PC-9 (cell line): ENCODE measurements at regions of chr1 and their contacts with region 1.

Region 1: DNA sequence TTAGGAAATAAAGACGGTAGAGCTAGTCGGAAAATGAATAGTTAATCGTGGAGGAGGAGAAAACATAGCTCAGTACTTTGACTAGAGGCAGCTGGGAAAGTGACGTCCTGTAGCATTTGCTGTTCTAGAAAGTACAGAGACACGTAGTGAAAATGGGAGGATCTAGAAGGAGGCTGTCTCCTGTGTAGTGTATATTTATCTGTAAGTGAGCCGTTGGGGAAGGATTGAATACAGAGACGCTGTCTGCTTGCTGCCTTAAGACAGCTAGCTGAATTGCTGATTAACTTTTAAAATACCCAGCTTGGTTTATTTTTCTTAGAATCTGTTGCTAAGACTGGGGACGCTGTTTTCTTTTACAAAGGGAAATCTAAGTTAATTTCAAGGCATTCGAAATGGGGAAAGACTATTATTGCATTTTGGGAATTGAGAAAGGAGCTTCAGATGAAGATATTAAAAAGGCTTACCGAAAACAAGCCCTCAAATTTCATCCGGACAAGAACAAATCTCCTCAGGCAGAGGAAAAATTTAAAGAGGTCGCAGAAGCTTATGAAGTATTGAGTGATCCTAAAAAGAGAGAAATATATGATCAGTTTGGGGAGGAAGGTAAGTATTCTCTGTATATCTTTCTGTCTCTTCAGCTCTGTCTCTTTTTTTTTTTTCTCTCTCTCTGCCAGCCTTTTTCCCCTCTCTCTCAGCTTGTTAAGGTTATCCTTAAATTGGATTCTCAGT is at the start of gene DNAJB4:
- DNase-seq: peak; percentile 58 to 96
- H3K4me3 ChIP-seq: peak within 1 kb of the TSS; percentile 73
- H3K27ac ChIP-seq: peak within 1 kb of the TSS; percentile 96
- H3K4me1 ChIP-seq: peaks cover 52% of the 10 kb centered on the region
- H3K27me3 ChIP-seq: no peaks in the 10 kb centered on the region
- CTCF ChIP-seq: no peak
- total RNA-seq, gene DNAJB4: 35.6 and 45.5 TPM in 2 replicates

Region 2: GRCh38 chr1:77632216-77632615 is 372.7 kb before region 1 on chr1:
- CTCF ChIA-PET with region 1: no interaction called
- POLR2A ChIA-PET with region 1: interaction called, 11 read pairs
- intact Hi-C with region 1: no loop called
- DNase-seq: no peak
- H3K4me3 ChIP-seq: no peak overlapping the region
- H3K27ac ChIP-seq: no peak overlapping the region
- H3K4me1 ChIP-seq: no peaks in the 10 kb centered on the region
- H3K27me3 ChIP-seq: no peaks in the 10 kb centered on the region
- CTCF ChIP-seq: no peak

Region 3: GRCh38 chr1:77900687-77901293 is 104.1 kb before region 1 on chr1:
- CTCF ChIA-PET with region 1: no interaction called
- POLR2A ChIA-PET with region 1: no interaction called
- intact Hi-C with region 1: no loop called
- DNase-seq: peak; percentile 19 to 60
- H3K4me3 ChIP-seq: no peak overlapping the region
- H3K27ac ChIP-seq: no peak overlapping the region
- H3K4me1 ChIP-seq: no peaks in the 10 kb centered on the region; the same call in 1 of the 2 replicates
- H3K27me3 ChIP-seq: no peaks in the 10 kb centered on the region
- CTCF ChIP-seq: peak; percentile 89

Region 4: GRCh38 chr1:77978969-77979876 is 25.7 kb before region 1 on chr1 and contains the start of gene FUBP1:
- CTCF ChIA-PET with region 1: interaction called, 10 read pairs
- POLR2A ChIA-PET with region 1: interaction called, 77 read pairs
- intact Hi-C with region 1: loop called (anchors 1 kb)
- DNase-seq: peak; percentile 93 to 97
- H3K4me3 ChIP-seq: peak within 1 kb of the TSS; percentile 80
- H3K27ac ChIP-seq: peak within 1 kb of the TSS; percentile 98
- H3K4me1 ChIP-seq: peaks cover 36% of the 10 kb centered on the region
- H3K27me3 ChIP-seq: no peaks in the 10 kb centered on the region
- CTCF ChIP-seq: peak; percentile 68
- total RNA-seq, gene FUBP1: 101 and 152 TPM in 2 replicates

Region 5: GRCh38 chr1:78070758-78071157 is 65.9 kb after region 1 on chr1:
- CTCF ChIA-PET with region 1: no interaction called
- POLR2A ChIA-PET with region 1: interaction called, 5 read pairs
- intact Hi-C with region 1: loop called (anchors 5 kb)
- DNase-seq: peak in 1 of 2 experiments; percentile 88
- H3K4me3 ChIP-seq: no peak overlapping the region
- H3K27ac ChIP-seq: peak overlapping the region; percentile 46
- H3K4me1 ChIP-seq: peaks cover 18% of the 10 kb centered on the region; the same call in 1 of the 2 replicates
- H3K27me3 ChIP-seq: no peaks in the 10 kb centered on the region
- CTCF ChIP-seq: no peak

Region 6: GRCh38 chr1:78095593-78095992 is 90.7 kb after region 1 on chr1:
- CTCF ChIA-PET with region 1: no interaction called
- POLR2A ChIA-PET with region 1: interaction called, 3 read pairs
- intact Hi-C with region 1: loop called (anchors 5 kb)
- DNase-seq: no peak
- H3K4me3 ChIP-seq: no peak overlapping the region
- H3K27ac ChIP-seq: no peak overlapping the region
- H3K4me1 ChIP-seq: peaks cover 13% of the 10 kb centered on the region
- H3K27me3 ChIP-seq: no peaks in the 10 kb centered on the region
- CTCF ChIP-seq: no peak

Region 7: DNA sequence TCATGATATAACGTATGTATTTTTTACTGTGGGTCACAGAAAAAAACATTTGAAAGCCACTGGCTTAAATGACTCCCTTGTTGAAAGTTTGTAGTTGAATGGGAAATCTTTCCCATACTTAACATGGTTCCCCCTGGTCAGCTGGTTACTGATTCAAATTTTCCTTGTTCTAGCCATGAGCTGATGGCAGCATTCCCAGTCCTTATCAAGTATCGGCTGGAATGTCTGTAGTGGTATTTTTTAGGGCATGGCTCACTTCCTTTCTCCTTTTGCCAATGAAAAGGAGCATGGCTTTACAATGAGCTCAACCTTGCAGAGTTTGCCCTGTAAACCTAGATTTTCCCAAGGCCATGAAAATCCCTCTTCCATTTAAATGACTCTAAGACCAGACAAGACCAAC is 96.6 kb after region 1 on chr1:
- CTCF ChIA-PET with region 1: no interaction called
- POLR2A ChIA-PET with region 1: interaction called, 12 read pairs
- intact Hi-C with region 1: no loop called
- DNase-seq: peak in 1 of 2 experiments; percentile 30
- H3K4me3 ChIP-seq: no peak overlapping the region
- H3K27ac ChIP-seq: no peak overlapping the region
- H3K4me1 ChIP-seq: no peaks in the 10 kb centered on the region
- H3K27me3 ChIP-seq: no peaks in the 10 kb centered on the region
- CTCF ChIP-seq: no peak

Region 8: DNA sequence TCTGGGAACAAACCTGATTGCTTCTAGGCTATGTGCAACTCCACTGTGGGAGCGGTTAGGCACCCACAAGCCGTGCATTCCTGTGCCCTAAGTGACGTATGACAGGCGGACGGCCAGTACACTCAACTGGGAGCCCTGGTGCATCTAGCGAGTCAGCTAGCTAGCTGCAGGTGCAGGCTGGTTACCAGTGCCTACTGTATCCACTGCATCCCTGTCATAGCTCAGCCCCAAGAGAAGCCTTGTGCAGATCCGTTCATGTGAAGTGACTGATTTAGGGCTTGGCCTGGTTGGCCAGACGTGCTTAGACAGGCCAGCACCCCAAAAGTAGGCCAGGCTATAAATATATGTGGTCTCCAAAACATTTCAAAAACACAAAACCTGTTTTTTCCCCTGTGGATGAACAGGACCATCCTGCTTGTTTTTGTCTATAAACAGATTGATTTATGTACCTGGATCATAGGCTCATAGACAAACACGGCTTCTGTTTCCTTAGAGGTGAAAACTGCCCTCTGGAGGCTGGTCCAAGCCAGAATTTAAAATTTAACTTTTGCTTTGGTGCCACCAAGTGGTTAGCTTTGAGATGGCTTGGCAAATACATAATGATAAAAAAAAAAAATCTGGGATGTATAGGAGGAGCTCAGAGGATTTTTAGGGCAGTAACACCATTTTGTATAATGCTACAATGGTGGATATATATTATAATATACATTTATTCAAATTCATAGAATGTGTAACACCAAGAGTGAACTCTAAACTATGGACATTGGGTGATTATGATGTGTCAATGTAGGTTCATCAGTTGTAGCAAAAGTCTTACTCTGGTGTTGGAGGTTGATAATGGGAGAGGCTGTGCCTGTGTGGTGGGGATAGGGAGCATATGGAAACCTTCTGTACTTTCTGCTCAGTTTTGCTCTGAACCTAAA is 109.4 kb after region 1 on chr1:
- CTCF ChIA-PET with region 1: interaction called, 3 read pairs
- POLR2A ChIA-PET with region 1: interaction called, 13 read pairs
- intact Hi-C with region 1: loop called (anchors 1 kb)
- DNase-seq: peak; percentile 64 to 72
- H3K4me3 ChIP-seq: no peak overlapping the region
- H3K27ac ChIP-seq: no peak overlapping the region
- H3K4me1 ChIP-seq: no peaks in the 10 kb centered on the region
- H3K27me3 ChIP-seq: no peaks in the 10 kb centered on the region
- CTCF ChIP-seq: peak; percentile 92